B cell (primary cell): ENCODE measurements at regions of chr10 and their contacts with region 1.

Region 1: GRCh38 chr10:68331455-68332258 is at the start of gene HNRNPH3:
- DNase-seq: peak; percentile 100
- ATAC-seq: peak; percentile 84
- H3K4me3 ChIP-seq: peak within 1 kb of the TSS; percentile 77 to 95 (median 90)
- H3K4me3 Mint-ChIP-seq: peak within 1 kb of the TSS; percentile 99
- H3K27ac ChIP-seq: peak within 1 kb of the TSS; percentile 93 to 94
- H3K27ac Mint-ChIP-seq: peak within 1 kb of the TSS; percentile 100
- H3K4me1 ChIP-seq: peaks cover 42 to 51% of the 10 kb centered on the region in 2 donors
- H3K4me1 Mint-ChIP-seq: peaks cover 62% of the 10 kb centered on the region
- H3K27me3 ChIP-seq: no peaks in the 10 kb centered on the region
- H3K27me3 Mint-ChIP-seq: no peaks in the 10 kb centered on the region
- CTCF ChIP-seq: no peak
- total RNA-seq, gene HNRNPH3: 120 and 124 TPM in 2 replicates

Region 2: GRCh38 chr10:67772894-67773511 is 558.7 kb before region 1 on chr10:
- CTCF ChIA-PET with region 1: no interaction called
- POLR2A ChIA-PET with region 1: interaction called, 3 read pairs
- intact Hi-C with region 1: loop called (anchors 5 kb)
- DNase-seq: peak; percentile 81
- ATAC-seq: peak; percentile 92
- H3K4me3 ChIP-seq: no peak overlapping the region
- H3K4me3 Mint-ChIP-seq: peak overlapping the region; percentile 64
- H3K27ac ChIP-seq: peak overlapping the region; percentile 62 to 78
- H3K27ac Mint-ChIP-seq: peak overlapping the region; percentile 89
- H3K4me1 ChIP-seq: peaks cover 41 to 45% of the 10 kb centered on the region in 2 donors
- H3K4me1 Mint-ChIP-seq: peaks cover 47% of the 10 kb centered on the region
- H3K27me3 ChIP-seq: no peaks in the 10 kb centered on the region
- H3K27me3 Mint-ChIP-seq: no peaks in the 10 kb centered on the region
- CTCF ChIP-seq: no peak

Region 3: DNA sequence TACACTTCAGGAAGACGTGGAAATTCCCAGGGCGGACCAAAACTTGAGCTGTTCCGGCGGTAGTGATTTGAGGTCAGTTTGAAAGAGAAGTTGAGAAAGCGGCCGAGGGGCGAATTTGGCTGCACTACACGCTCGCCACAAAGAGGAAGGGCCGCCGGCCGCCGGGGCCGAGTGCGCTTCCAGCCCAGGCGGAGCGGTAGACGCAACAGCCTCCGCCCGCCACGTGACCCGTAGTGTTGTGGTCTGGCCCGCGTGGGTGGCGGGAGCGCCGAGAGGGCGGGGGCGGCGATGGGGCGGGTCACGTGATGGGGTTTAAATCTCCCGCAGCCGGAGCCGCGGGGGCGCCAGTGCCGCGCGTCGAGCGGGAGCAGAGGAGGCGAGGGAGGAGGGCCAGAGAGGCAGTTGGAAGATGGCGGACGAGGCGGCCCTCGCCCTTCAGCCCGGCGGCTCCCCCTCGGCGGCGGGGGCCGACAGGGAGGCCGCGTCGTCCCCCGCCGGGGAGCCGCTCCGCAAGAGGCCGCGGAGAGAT is 447.3 kb before region 1 on chr10 and contains the start of gene SIRT1:
- CTCF ChIA-PET with region 1: no interaction called
- POLR2A ChIA-PET with region 1: interaction called, 20 read pairs
- intact Hi-C with region 1: no loop called
- DNase-seq: peak; percentile 97
- ATAC-seq: peak; percentile 78
- H3K4me3 ChIP-seq: peak within 1 kb of the TSS; percentile 74 to 89 (median 79)
- H3K4me3 Mint-ChIP-seq: peak within 1 kb of the TSS; percentile 90
- H3K27ac ChIP-seq: peak within 1 kb of the TSS; percentile 82 to 90
- H3K27ac Mint-ChIP-seq: peak within 1 kb of the TSS; percentile 99
- H3K4me1 ChIP-seq: peaks cover 5 to 19% of the 10 kb centered on the region in 2 donors
- H3K4me1 Mint-ChIP-seq: peaks cover 34% of the 10 kb centered on the region
- H3K27me3 ChIP-seq: no peaks in the 10 kb centered on the region
- H3K27me3 Mint-ChIP-seq: no peaks in the 10 kb centered on the region
- CTCF ChIP-seq: no peak
- total RNA-seq, gene SIRT1: 66.5 and 67.8 TPM in 2 replicates

Region 4: DNA sequence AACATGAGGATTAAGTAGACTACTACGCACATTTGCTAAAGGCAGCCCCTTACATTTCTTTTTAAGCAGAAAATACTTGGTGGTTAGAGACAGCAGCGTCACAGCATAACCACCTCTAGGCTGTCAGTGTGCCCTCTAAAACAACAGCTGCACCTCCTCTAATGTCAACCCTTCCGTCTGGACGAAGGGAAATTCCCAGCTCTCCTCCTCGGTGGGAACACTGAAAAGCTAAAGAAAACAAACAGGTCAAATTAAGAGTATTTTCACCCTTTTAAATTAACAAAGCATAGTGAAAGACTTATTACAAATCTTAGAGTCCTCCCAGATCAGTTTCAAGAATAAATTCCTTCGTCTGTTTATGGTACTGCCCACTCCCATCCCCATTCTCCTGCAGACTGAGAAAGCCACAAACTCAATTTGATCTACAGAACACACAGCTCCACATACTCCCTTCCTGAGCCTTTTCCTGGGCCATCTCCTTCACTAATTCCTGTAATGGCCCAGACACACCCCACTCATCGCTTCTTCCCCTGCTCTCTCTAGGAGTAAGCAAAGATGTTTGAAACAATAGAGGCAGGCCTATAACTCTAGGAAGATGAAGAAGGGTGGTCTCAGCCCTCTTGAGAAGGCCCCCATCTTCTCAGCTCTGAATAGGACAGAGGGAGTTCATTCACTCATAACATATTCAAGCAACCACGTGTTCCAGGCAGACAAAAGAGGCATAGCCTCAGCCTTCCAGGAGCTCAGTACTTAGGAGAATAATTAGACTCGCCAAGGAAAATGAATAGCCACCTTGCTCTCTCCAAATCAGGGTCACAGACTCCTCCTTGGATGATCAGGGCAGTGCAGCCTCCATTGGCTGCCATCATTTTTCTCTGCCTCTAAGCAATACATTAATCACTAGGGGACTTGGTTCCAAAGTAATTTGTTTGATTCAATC is 47.3 kb before region 1 on chr10:
- CTCF ChIA-PET with region 1: no interaction called
- POLR2A ChIA-PET with region 1: no interaction called
- intact Hi-C with region 1: no loop called
- DNase-seq: no peak
- ATAC-seq: no peak
- H3K4me3 ChIP-seq: no peak overlapping the region
- H3K4me3 Mint-ChIP-seq: no peak overlapping the region
- H3K27ac ChIP-seq: no peak overlapping the region
- H3K27ac Mint-ChIP-seq: no peak overlapping the region
- H3K4me1 ChIP-seq: no peaks in the 10 kb centered on the region
- H3K4me1 Mint-ChIP-seq: no peaks in the 10 kb centered on the region
- H3K27me3 ChIP-seq: no peaks in the 10 kb centered on the region
- H3K27me3 Mint-ChIP-seq: no peaks in the 10 kb centered on the region
- CTCF ChIP-seq: no peak

Region 5: GRCh38 chr10:68348265-68348741 is 16.6 kb after region 1 on chr10:
- CTCF ChIA-PET with region 1: interaction called, 22 read pairs
- POLR2A ChIA-PET with region 1: interaction called, 5 read pairs
- intact Hi-C with region 1: loop called (anchors 2 kb)
- DNase-seq: peak; percentile 60
- ATAC-seq: peak; percentile 68
- H3K4me3 ChIP-seq: no peak overlapping the region
- H3K4me3 Mint-ChIP-seq: no peak overlapping the region
- H3K27ac ChIP-seq: peak overlapping the region in 1 of 2 donors; percentile 48
- H3K27ac Mint-ChIP-seq: peak overlapping the region; percentile 70
- H3K4me1 ChIP-seq: no peaks in the 10 kb centered on the region
- H3K4me1 Mint-ChIP-seq: no peaks in the 10 kb centered on the region
- H3K27me3 ChIP-seq: no peaks in the 10 kb centered on the region
- H3K27me3 Mint-ChIP-seq: no peaks in the 10 kb centered on the region
- CTCF ChIP-seq: peak; percentile 80

Region 6: DNA sequence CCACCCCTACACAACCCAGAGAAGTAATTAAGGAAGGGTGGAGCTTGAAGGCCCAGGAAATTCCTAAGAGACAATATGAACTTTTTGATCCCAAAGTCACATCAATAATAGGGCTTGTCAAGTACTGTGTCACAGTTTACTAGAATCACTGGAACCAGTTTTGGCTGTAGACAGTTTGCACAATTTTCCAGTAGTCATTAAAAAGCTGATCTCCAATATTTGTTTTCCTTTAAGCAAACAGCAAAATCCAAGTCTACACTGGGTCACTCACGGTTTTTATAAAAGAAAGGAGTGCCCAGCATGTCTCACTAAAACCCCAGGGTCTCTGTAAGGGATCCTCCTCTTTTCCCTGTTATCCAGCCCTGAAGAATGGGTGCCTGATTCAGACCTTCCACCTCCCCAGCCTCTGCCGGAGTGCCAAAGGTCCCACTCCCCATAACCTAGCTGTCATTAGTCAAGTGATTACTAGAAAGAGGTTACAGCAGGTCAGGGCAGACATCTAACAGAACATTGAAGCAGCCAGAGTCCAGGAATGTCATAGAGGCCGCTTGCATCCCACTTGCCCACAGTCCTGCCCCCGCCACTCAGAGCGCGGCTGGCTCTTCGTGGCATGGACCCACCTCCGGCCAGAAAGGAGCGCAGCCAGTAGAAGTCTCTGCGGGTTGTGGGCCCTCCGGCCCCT is 195.1 kb after region 1 on chr10:
- CTCF ChIA-PET with region 1: no interaction called
- POLR2A ChIA-PET with region 1: no interaction called
- intact Hi-C with region 1: loop called (anchors 1 kb)
- DNase-seq: no peak
- ATAC-seq: no peak
- H3K4me3 ChIP-seq: peak overlapping the region; percentile 70 to 98 (median 92)
- H3K4me3 Mint-ChIP-seq: peak overlapping the region; percentile 87
- H3K27ac ChIP-seq: peak overlapping the region; percentile 86 to 95
- H3K27ac Mint-ChIP-seq: peak overlapping the region; percentile 91
- H3K4me1 ChIP-seq: peaks cover 6 to 13% of the 10 kb centered on the region in 2 donors
- H3K4me1 Mint-ChIP-seq: peaks cover 17% of the 10 kb centered on the region
- H3K27me3 ChIP-seq: no peaks in the 10 kb centered on the region
- H3K27me3 Mint-ChIP-seq: no peaks in the 10 kb centered on the region
- CTCF ChIP-seq: no peak

Region 7: DNA sequence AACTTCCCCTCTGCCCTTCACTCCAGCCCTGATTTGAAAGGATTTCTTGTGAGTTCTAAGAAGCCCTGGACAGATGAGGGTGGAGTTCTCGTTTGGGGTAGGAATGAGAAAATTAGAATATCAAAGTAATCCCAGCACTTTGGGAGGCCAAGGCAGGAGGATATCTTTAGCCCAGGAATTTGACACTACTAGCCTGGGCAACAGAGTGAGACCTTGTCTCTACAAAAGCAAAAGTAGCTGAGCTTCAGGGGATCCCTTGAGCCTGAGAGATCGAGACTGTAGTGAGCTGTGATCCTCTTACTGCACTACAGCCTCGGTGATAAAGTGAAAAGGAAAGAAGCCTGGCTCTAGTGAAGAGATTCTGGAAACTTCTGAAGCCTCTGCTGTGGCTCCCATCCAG is 304.7 kb after region 1 on chr10:
- CTCF ChIA-PET with region 1: no interaction called
- POLR2A ChIA-PET with region 1: no interaction called
- intact Hi-C with region 1: no loop called
- DNase-seq: no peak
- ATAC-seq: no peak
- H3K4me3 ChIP-seq: no peak overlapping the region
- H3K4me3 Mint-ChIP-seq: no peak overlapping the region
- H3K27ac ChIP-seq: no peak overlapping the region
- H3K27ac Mint-ChIP-seq: no peak overlapping the region
- H3K4me1 ChIP-seq: no peaks in the 10 kb centered on the region
- H3K4me1 Mint-ChIP-seq: no peaks in the 10 kb centered on the region
- H3K27me3 ChIP-seq: no peaks in the 10 kb centered on the region
- H3K27me3 Mint-ChIP-seq: no peaks in the 10 kb centered on the region
- CTCF ChIP-seq: no peak